Activated T-helper 1 cell treated with anti-CD3 and anti-CD28 coated beads, Interleukin-12 subunit alpha, Interleukin-12 subunit beta, Interleukin-2, Interleukin-4 antibody, amounts not matched to agents 30 ng/mL and 10 ng/mL and 1 ng/mL, durations not matched to agents 14 hours and 24 hours and 36 hours (primary cell): ENCODE measurements at regions of chr2 and their contacts with region 1.

Region 1: GRCh38 chr2:196535742-196536141 is 103.8 kb upstream of the CCDC150 start:
- DNase-seq: no peak
- H3K4me3 Mint-ChIP-seq: no peak overlapping the region
- H3K27ac Mint-ChIP-seq: no peak overlapping the region
- H3K4me1 Mint-ChIP-seq: peaks cover 26% of the 10 kb centered on the region
- H3K27me3 Mint-ChIP-seq: peaks cover 4% of the 10 kb centered on the region

Region 2: DNA sequence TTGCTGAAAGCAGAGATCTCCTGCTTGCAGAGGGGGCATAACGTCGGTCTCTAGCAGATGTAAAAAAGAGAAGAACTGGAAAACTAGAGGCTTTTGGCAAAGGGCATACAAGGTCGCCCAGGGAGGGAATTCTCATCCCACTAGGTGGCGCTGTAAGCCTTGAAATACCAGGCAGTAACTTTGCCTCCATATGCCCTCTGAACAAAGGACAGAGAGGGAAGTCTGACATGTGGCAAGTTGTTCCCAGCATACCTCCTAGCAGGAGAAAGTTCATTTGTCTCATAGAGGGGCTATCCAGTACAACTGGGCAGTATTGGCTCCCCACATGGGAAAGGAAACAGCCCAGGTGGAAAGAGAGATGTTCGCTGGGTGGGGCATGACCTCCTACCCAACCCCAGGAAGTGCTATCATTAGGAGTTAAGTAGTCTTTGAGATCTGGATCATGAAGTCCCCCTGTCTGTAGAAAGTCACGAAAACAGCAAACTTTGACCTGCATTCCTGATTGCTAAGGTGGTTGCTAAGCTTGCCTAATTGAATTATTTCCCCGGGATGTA is 404.3 kb before region 1 on chr2:
- intact Hi-C with region 1: no loop called
- DNase-seq: peak; percentile 41
- H3K4me3 Mint-ChIP-seq: no peak overlapping the region
- H3K27ac Mint-ChIP-seq: peak overlapping the region; percentile 78
- H3K4me1 Mint-ChIP-seq: peaks cover 31% of the 10 kb centered on the region
- H3K27me3 Mint-ChIP-seq: peaks cover 3% of the 10 kb centered on the region

Region 3: GRCh38 chr2:196565106-196565765 is 29.5 kb after region 1 on chr2:
- intact Hi-C with region 1: no loop called
- DNase-seq: no peak
- H3K4me3 Mint-ChIP-seq: no peak overlapping the region
- H3K27ac Mint-ChIP-seq: no peak overlapping the region
- H3K4me1 Mint-ChIP-seq: no peaks in the 10 kb centered on the region
- H3K27me3 Mint-ChIP-seq: peaks cover 15% of the 10 kb centered on the region

Region 4: GRCh38 chr2:196750982-196751635 is 215.4 kb after region 1 on chr2:
- intact Hi-C with region 1: loop called (anchors 10 kb)
- DNase-seq: peak; percentile 54
- H3K4me3 Mint-ChIP-seq: no peak overlapping the region
- H3K27ac Mint-ChIP-seq: no peak overlapping the region
- H3K4me1 Mint-ChIP-seq: peaks cover 23% of the 10 kb centered on the region
- H3K27me3 Mint-ChIP-seq: no peaks in the 10 kb centered on the region